ENCODE measurements at regions of chr3 and their contacts with region 1.

Region 1: DNA sequence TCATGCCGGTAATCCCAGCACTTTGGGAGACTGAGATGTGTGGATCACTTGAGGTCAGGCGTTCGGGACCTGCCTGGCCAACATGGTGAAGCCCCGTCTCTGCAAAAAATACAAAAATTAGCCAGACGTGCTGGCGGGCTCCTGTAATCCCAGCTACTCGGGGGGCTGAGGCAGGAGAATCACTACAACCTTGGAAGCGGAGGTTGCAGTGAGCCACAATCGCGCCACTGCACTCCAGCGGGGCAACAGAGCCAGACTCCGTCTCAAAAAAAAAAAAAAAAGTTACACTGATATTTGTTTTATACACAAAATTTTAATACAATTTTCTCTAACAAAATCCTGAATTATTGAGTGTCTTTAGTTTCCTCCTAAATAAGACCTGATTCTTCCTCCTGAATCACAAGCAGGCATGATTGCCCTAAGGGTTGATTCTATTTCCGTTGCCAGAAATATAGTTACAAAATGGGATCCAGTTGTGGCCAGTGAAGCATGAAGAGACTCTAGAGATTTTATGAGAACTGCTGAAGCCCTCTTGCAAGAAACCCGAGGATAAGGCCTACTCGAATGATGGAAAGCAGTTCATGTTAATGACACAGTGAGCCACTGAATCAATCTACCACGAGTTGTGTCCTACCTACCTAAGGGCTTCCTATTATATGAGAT is 9.6 kb upstream of the SMARCC1 start:
- DNase-seq: no peak
- H3K4me3 Mint-ChIP-seq: no peak overlapping the region
- H3K27ac Mint-ChIP-seq: no peak overlapping the region
- H3K4me1 Mint-ChIP-seq: peaks cover 2% of the 10 kb centered on the region
- H3K27me3 Mint-ChIP-seq: no peaks in the 10 kb centered on the region

Region 2: GRCh38 chr3:47420511-47421484 is 370.5 kb before region 1 on chr3:
- intact Hi-C with region 1: loop called (anchors 1 kb)
- DNase-seq: peak; percentile 97
- H3K4me3 Mint-ChIP-seq: peak overlapping the region; percentile 71
- H3K27ac Mint-ChIP-seq: peak overlapping the region; percentile 99
- H3K4me1 Mint-ChIP-seq: peaks cover 13% of the 10 kb centered on the region
- H3K27me3 Mint-ChIP-seq: no peaks in the 10 kb centered on the region

Region 3: DNA sequence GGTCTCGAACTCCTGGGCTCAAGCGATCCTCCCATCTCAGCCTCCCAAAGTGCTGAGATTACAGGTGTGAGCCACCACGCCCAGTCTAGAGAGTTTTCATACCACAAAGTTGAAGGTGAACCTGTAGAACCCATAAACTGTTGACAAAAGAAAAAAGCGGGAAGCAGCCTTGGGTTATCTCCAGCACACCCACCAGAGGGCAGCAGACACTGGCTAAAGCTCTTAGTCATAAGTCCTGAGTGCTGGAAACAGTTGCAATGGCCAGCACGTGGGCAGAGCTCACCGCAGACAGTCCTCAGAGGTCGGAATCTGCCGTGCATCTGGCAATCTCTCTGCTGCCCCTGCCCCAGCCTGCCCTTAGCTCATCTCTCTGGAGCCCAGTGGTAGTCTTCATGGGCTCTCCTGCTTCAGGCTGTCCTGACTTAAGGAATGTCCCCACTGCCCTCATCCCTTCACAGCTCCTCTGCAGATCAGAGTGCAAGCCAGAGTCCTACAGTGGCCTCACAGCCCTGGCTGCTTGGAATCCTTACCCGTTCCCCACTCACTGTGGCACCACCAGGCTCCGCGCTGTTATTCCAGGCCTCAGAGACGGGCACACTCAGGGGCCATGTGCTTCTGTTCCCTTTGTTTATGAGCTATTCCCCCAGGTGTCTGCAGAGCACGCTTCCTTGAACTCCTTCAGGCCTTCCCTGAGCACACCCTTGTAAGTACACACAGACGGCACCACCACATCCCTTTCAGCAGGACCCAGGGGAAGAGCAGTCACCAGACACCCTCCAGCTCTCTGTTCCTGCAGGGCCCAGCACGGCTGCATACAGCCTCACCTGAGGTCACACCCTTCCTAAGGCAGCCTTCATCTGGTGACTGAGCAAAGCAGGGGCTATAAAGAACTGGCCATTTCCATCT is 269.0 kb before region 1 on chr3:
- intact Hi-C with region 1: loop called (anchors 1 kb)
- DNase-seq: peak; percentile 93
- H3K4me3 Mint-ChIP-seq: no peak overlapping the region
- H3K27ac Mint-ChIP-seq: peak overlapping the region; percentile 41
- H3K4me1 Mint-ChIP-seq: peaks cover 4% of the 10 kb centered on the region
- H3K27me3 Mint-ChIP-seq: no peaks in the 10 kb centered on the region

Region 4: DNA sequence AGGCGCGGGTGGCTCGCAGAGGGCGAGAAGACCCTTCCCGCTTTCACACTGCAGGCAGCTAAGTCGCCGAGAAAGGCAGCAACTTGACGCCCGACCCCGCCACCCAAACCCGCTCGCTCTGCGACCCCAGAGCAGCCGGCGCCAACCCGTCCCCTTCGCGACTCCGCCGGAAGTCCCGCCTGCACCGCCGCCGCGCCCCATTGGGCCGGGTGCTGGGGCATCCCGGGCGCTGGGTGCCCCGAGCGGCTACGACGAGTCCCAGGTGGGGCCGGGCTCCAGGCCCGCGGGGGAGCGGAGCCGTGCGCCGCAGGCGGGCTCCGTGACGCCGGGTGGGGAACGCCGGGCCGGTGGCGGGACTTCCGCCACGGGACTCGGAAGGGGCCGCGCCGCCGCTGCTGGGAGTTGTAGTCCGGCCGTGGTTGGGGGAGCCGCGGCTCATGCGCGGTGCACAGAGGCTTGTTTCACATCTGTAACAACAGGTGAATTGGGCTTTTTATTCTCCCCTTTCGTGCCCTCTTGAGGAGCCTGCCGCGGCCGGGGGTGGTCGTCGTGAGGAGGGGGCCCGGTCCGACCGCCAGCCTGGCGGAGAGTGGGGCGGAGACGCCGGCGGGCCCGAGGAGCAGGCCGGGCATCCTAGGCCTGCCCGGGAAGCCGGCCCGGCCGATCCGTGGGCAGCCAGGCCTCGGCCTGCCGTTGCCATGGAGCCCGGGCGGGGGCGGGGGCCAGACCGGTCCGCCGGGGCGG is 11.6 kb after region 1 on chr3 and contains the start of gene DHX30:
- intact Hi-C with region 1: loop called (anchors 1 kb)
- DNase-seq: peak; percentile 96
- H3K4me3 Mint-ChIP-seq: peak within 1 kb of the TSS; percentile 99
- H3K27ac Mint-ChIP-seq: peak within 1 kb of the TSS; percentile 96
- H3K4me1 Mint-ChIP-seq: peaks cover 19% of the 10 kb centered on the region
- H3K27me3 Mint-ChIP-seq: no peaks in the 10 kb centered on the region
- total RNA-seq, gene DHX30: 143 and 149 TPM in 2 replicates

Region 5: DNA sequence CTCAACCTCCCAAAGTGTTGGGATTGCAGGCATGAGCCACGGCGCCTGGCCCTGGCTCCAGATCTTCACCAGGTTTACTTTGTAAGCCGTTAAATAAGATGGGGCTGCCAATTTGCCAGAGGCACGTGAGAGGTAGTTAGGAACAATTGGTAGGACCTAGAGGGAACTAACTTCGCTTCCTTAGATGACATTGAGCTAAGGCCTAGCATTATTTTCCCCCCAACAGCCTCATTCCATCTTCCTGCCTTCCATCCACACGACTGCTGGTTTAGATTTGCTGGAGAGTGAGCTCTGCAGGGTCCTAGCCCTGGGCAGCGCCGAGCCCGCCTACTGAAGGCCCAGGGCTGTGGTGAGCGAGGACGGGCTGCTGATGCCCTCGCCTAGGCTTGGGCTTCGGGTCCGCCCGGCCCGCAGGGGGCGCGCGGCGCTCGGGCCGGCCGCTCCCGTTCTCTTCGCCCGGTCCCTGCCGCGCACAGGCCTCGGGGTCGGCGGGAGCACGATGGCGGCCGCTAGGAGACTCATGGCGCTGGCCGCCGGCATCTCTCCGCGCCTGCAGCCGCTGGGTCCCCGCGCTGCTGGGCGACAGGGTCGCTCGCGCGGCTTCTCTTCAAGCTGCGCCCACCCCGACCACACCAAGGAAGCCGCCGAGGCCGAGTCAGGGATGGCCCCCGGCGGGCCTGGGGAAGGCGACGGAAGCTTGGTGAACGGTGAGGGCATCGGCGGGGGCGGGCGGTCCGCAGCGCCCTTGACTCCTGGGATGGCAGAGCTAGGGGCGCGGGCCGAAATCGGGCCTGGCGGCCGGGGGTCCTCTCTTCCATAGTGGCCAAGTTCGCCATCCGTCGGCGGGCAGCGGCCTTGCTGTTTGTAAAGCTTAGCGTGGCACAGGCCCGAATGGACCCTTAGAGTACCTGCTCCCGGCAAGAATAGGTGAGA is 33.5 kb after region 1 on chr3:
- intact Hi-C with region 1: loop called (anchors 2 kb)
- DNase-seq: peak; percentile 95
- H3K4me3 Mint-ChIP-seq: peak overlapping the region; percentile 93
- H3K27ac Mint-ChIP-seq: peak overlapping the region; percentile 83
- H3K4me1 Mint-ChIP-seq: peaks cover 31% of the 10 kb centered on the region
- H3K27me3 Mint-ChIP-seq: no peaks in the 10 kb centered on the region

Measured in activated CD4-positive, alpha-beta T cell treated with anti-CD3 and anti-CD28 coated beads, Interleukin-2, amount 10 ng/mL, durations not matched to agents 24 days and 14 days (primary cell).